Activated naive CD4-positive, alpha-beta T cell treated with anti-CD3 and anti-CD28 coated beads for 36 hours (primary cell): ENCODE measurements at regions of chr12 and their contacts with region 1.

Region 1: GRCh38 chr12:31749024-31749704 is 20.3 kb upstream of the AMN1 start:
- DNase-seq: peak; percentile 88
- H3K4me3 Mint-ChIP-seq: no peak overlapping the region
- H3K27ac Mint-ChIP-seq: peak overlapping the region; percentile 76
- H3K4me1 Mint-ChIP-seq: peaks cover 63% of the 10 kb centered on the region
- H3K27me3 Mint-ChIP-seq: no peaks in the 10 kb centered on the region

Region 2: GRCh38 chr12:31728917-31729640 is 20.1 kb before region 1 on chr12 and contains the start of gene AMN1:
- CTCF ChIA-PET with region 1: interaction called, 5 read pairs
- intact Hi-C with region 1: loop called (anchors 1 kb)
- DNase-seq: peak; percentile 99
- H3K4me3 Mint-ChIP-seq: peak within 1 kb of the TSS; percentile 95
- H3K27ac Mint-ChIP-seq: peak within 1 kb of the TSS; percentile 97
- H3K4me1 Mint-ChIP-seq: peaks cover 38% of the 10 kb centered on the region
- H3K27me3 Mint-ChIP-seq: no peaks in the 10 kb centered on the region
- total RNA-seq, gene AMN1: 6.6 to 8.0 TPM

Region 3: DNA sequence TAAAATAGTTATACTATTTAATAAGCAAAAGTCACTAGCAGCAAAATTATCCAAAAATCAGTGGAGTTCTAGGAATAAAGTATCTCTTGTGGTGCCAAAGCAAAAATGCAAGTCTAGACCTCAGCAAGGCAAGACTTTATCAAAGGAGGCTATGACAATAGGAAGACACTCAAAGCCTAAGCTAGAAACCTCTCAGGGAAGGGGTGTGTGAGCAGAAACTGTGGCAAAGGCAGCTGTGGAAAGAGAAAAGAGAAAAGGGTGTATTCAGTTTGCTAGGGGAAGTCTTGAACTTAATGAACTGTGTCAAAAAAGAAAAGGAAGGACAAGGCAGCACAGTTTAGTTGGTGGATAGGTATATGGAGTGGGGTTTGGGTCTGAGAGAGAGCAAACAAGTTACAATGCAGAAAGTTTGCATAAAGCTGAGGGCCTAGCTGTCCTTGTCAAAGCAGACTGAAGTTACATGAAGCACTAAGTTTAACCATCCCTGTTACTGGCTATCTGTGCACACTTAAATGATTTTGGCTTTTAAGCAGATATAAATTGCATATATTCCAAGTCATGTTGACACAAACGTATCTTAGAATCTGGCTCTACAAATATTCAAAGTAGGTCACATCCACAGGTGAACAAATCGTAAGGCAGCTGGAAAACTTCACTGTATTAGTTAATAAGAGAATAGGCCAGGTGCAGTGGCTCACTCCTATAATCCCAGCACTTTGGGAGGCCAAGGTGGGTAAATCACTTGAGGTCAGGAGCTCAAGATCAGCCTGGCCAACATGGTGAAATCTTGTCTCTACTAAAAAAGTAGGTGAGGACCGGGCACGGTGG is 10.7 kb after region 1 on chr12:
- CTCF ChIA-PET with region 1: no interaction called
- intact Hi-C with region 1: loop called (anchors 1 kb)
- DNase-seq: no peak
- H3K4me3 Mint-ChIP-seq: no peak overlapping the region
- H3K27ac Mint-ChIP-seq: no peak overlapping the region
- H3K4me1 Mint-ChIP-seq: peaks cover 17% of the 10 kb centered on the region
- H3K27me3 Mint-ChIP-seq: no peaks in the 10 kb centered on the region

Region 4: DNA sequence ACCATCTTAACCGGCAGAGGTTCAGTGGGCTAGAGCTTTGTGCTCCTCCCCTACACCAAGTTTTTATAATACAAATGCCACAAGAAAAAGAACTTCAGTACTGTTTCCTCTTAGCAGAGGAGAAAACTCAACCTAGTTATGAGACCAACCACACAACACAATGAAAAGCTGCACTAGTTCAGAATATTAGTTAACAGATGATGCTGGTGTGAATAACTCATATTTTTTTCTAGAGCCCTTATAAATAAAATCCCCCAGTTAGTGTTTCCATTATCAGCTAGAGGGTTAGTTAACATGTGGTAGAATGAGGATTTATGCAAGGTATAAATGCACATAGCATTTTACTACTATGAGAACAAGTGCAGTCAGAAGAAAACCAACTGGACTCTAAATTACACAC is 41.6 kb after region 1 on chr12:
- CTCF ChIA-PET with region 1: no interaction called
- intact Hi-C with region 1: no loop called
- DNase-seq: no peak
- H3K4me3 Mint-ChIP-seq: no peak overlapping the region
- H3K27ac Mint-ChIP-seq: peak overlapping the region; percentile 18
- H3K4me1 Mint-ChIP-seq: peaks cover 27% of the 10 kb centered on the region
- H3K27me3 Mint-ChIP-seq: no peaks in the 10 kb centered on the region

Region 5: DNA sequence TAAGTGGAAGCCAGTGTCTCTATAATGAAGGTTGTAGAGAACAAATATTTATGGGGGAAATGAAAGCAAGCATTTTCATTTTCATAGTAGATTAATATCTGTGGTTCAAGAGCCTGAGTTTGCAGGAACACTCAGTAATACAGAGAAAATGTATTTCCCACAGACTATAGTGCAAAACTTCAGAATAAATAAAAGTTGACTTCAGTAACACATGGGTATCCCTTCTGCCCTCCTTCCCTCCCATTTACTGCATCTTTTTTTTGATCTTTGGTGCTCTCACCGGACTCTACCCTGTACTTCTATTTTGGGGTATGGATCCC is 55.0 kb after region 1 on chr12:
- CTCF ChIA-PET with region 1: no interaction called
- intact Hi-C with region 1: loop called (anchors 1 kb)
- DNase-seq: no peak
- H3K4me3 Mint-ChIP-seq: peak overlapping the region; percentile 78
- H3K27ac Mint-ChIP-seq: peak overlapping the region; percentile 87
- H3K4me1 Mint-ChIP-seq: peaks cover 51% of the 10 kb centered on the region
- H3K27me3 Mint-ChIP-seq: no peaks in the 10 kb centered on the region

Region 6: GRCh38 chr12:31874961-31875608 is 125.9 kb after region 1 on chr12:
- CTCF ChIA-PET with region 1: no interaction called
- intact Hi-C with region 1: loop called (anchors 5 kb)
- DNase-seq: peak; percentile 90
- H3K4me3 Mint-ChIP-seq: peak overlapping the region; percentile 73
- H3K27ac Mint-ChIP-seq: peak overlapping the region; percentile 100
- H3K4me1 Mint-ChIP-seq: peaks cover 37% of the 10 kb centered on the region
- H3K27me3 Mint-ChIP-seq: no peaks in the 10 kb centered on the region

Region 7: DNA sequence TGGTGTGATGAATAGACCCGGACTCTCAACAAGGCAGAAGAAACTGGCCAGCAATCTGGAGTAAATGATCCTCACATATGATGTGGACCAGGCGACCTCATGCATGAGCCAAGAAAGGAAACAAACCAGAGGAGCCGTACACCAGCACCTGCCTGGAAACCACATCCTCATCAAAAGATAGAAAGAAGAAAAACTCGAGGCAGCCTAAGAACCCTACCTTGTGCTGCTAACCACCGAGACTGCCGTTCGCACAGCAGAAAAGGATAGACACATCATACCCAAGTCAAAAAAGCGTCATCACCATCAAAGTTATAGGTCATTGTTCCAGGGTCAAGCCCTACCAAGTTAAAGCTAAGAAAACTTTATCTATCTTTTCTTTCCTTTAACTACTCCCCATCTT is 276.7 kb after region 1 on chr12:
- CTCF ChIA-PET with region 1: no interaction called
- intact Hi-C with region 1: loop called (anchors 5 kb)
- DNase-seq: peak; percentile 84
- H3K4me3 Mint-ChIP-seq: no peak overlapping the region
- H3K27ac Mint-ChIP-seq: peak overlapping the region; percentile 81
- H3K4me1 Mint-ChIP-seq: peaks cover 24% of the 10 kb centered on the region
- H3K27me3 Mint-ChIP-seq: no peaks in the 10 kb centered on the region

Region 8: DNA sequence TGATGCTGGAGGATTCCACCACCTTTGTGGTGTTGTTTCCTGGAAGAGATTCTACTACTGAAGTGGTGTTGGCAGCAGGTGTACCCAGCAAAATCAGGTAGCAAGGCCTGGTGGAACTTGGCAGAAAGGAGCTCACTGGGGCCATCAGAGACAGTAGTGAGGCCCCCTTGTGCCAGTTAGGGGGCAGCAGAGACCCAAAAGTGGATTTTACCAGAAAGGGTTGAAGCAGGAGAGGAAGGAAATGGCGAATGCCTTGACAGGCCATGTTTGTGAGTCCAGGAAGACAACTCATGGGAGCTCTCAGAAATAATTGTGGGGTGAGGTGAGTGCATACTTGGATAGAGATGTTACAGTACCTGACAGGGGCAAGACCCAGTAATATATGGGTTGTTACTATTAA is 512.5 kb after region 1 on chr12:
- CTCF ChIA-PET with region 1: no interaction called
- intact Hi-C with region 1: loop called (anchors 1 kb)
- DNase-seq: peak; percentile 46
- H3K4me3 Mint-ChIP-seq: no peak overlapping the region
- H3K27ac Mint-ChIP-seq: no peak overlapping the region
- H3K4me1 Mint-ChIP-seq: peaks cover 21% of the 10 kb centered on the region
- H3K27me3 Mint-ChIP-seq: no peaks in the 10 kb centered on the region